Astrocyte of the cerebellum (primary cell): ENCODE measurements at regions of chr2 and their contacts with region 1.

Region 1: GRCh38 chr2:69779258-69780001 is 37.5 kb downstream of the ANXA4 start:
- DNase-seq: no peak
- H3K4me3 ChIP-seq: no peak overlapping the region
- CTCF ChIP-seq: no peak

Region 2: GRCh38 chr2:68909793-68910674 is 869.4 kb before region 1 on chr2:
- in situ Hi-C with region 1: no loop called
- DNase-seq: peak; percentile 74
- H3K4me3 ChIP-seq: no peak overlapping the region
- CTCF ChIP-seq: peak; percentile 94

Region 3: DNA sequence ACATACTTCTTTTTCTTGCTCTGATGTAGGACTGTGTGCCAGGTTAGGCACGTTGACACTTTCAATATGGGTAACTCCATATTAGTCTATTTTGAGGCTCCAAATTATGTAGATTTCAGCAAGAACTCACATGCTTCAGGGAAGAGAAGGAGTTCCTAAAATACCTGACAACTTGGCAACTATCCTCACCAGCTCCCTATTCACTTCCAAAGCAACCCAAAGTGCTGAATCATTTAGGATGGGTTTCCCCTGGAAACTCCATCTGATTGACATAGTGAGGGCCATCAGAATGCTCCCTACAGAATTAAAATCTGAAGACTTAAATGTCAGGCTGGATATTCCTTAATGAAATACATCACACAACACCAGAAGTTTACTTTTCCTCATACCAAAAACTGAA is 309.6 kb before region 1 on chr2:
- in situ Hi-C with region 1: no loop called
- DNase-seq: no peak
- H3K4me3 ChIP-seq: no peak overlapping the region
- CTCF ChIP-seq: no peak

Region 4: GRCh38 chr2:69829256-69830046 is 50.0 kb after region 1 on chr2 and contains the start of gene GMCL1:
- in situ Hi-C with region 1: loop called (anchors 5 kb)
- DNase-seq: peak; percentile 86
- H3K4me3 ChIP-seq: peak within 1 kb of the TSS; percentile 73
- CTCF ChIP-seq: no peak

Region 5: GRCh38 chr2:69848201-69848770 is 68.9 kb after region 1 on chr2:
- in situ Hi-C with region 1: no loop called
- DNase-seq: no peak
- H3K4me3 ChIP-seq: no peak overlapping the region
- CTCF ChIP-seq: no peak

Region 6: DNA sequence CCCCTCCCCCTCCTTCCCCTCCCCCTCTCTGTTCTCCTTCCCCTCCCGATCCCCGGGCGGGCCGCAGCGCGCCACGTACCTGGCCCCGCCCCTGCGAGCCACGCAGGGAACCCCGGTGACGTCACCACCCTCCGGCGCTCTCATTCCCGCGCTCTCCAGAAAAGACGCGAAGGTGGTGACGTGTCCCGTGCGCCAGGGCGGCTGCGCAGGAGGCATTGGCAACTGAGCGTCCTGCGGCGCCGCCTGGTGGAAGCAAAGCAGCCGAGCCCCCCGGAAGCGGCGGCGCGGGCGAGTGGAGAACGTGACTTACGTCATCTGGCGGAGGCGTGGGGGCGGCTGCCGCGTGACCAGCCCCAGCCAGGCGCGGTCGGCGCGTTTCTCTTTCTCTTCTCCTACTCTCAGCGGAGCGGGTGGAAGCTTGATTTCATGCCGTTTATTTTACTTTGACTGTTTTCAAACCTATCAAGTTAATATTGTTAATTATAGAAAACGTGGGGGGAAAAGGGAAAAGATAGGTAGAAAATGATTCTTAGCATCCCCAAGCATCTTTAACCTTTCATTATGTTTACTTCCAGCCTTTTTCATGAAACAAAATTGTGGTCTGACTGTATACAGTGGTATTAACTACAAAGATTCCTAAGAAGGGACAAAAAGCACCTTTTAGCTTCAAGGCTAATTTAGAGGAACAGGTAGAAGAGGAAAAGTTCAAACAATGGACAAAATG is 363.3 kb after region 1 on chr2:
- in situ Hi-C with region 1: no loop called
- DNase-seq: peak; percentile 97
- H3K4me3 ChIP-seq: peak overlapping the region; percentile 39
- CTCF ChIP-seq: peak; percentile 90